Sigmoid colon (tissue), 7 donors: ENCODE measurements at regions of chr15 and their contacts with region 1.

Region 1: DNA sequence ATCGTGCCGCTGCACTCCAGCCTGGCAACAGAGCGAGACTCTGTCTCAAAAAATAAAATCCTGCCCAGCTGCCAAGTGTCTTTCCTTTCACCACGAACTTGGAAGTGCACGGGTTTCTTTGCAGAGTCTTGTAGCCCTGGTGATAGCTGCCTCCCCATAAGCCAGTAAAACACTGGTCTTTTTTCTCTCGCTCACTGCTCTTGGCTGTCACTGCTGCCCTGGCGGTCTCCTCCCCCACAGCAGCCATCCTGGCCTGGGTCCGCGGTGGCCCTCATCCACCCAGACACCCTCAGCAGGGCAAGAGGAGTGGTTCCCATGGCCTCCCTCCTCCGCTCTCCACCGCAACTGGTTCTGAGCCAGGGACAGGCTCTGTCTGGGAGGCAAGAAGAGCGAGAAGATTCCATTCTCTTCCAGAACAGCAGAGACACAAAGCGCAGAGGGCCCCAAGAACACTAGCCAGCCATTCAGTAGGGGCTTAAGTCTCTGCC is 44.4 kb downstream of the KLHL25 start:
- DNase-seq: peak; percentile 90
- H3K4me3 ChIP-seq: peak overlapping the region in 3 of 4 donors; percentile 14 to 23 (median 17)
- H3K27ac ChIP-seq: peak overlapping the region; percentile 66 to 88 (median 76)
- H3K4me1 ChIP-seq: peaks cover 0 to 49% (median 40%) of the 10 kb centered on the region in 4 donors
- H3K27me3 ChIP-seq: no peaks in the 10 kb centered on the region
- CTCF ChIP-seq: no peak
- EP300 ChIP-seq: no peak
- POLR2A ChIP-seq: no peak

Region 2: DNA sequence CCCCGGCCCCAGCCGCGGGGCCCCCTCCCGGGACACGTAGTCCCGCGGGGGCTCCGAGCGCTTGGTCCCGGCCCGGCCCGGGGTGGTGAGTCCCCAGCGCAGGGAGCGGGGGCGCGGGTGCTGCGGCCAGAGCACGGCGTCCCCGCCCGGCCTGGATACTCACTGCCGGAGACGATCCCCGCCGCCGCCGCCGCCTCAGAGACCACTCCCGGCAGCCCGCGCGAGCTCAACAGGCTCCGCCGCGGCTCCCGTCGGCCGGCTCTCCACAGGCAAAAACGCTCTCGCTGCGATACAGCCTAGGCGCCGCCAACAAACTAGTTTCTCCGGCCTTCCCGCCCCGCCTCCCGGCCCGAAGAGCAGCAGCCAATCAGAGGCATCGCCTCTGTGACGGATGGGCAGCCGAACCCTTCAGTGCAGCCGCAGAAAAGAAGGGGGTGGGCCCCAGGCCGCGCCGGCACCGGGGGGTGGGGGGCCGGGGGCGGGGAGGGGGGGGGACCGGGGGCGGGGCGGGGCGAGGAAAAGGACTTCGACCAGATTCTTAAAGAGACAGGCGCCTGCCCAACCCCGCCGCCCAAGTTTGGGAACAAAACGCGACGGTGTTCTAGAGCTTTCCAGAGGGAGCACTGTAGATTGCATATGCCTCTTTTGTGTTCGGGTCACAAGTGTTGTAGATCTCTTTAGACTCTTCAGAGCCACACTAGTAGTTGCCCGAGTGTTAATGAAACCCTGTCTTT is 44.4 kb after region 1 on chr15 and contains the start of gene KLHL25:
- intact Hi-C with region 1: loop called (anchors 2 kb)
- DNase-seq: peak; percentile 97
- H3K4me3 ChIP-seq: peak within 1 kb of the TSS; percentile 69 to 94 (median 78)
- H3K27ac ChIP-seq: peak within 1 kb of the TSS; percentile 84 to 95 (median 89)
- H3K4me1 ChIP-seq: peaks cover 0 to 24% (median 18%) of the 10 kb centered on the region in 4 donors
- H3K27me3 ChIP-seq: no peaks in the 10 kb centered on the region
- CTCF ChIP-seq: no peak
- EP300 ChIP-seq: no peak
- POLR2A ChIP-seq: peak; percentile 21 to 69
- total RNA-seq, gene KLHL25: 4.1 to 9.0 (median 6.9) TPM

Region 3: DNA sequence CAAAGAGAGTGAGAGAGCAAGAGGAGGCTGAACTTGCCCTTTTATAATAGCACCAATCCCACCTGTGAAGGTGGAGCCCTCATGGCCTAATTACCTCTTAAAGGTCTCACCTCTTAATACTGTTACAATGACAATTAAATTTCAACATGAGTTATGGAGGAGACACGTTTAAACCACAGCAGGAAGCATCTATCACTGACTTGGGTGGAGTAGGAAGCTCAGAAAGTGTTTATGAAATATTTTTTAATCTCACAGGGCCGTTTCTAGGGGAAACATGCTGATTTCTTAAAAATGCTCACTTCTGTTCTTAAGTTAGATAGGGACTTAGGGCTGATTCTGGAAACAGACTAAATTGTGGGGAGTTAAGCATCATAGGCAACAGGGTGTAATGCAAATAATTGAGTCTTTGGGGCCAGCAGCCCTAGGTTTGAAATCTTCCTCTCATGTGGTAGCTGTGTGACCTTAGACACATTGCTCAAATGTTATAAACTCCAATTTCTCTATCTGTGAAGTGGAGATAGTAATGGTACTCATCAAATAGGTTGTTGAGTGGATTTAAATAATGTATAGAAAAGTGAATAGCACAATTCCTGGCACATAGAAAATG is 177.7 kb after region 1 on chr15:
- intact Hi-C with region 1: no loop called
- DNase-seq: no peak
- H3K4me3 ChIP-seq: no peak overlapping the region
- H3K27ac ChIP-seq: no peak overlapping the region
- H3K4me1 ChIP-seq: no peaks in the 10 kb centered on the region
- H3K27me3 ChIP-seq: no peaks in the 10 kb centered on the region
- CTCF ChIP-seq: no peak
- EP300 ChIP-seq: no peak
- POLR2A ChIP-seq: no peak